WTC11 (cell line): ENCODE measurements at regions of chr11 and their contacts with region 1.

Region 1: GRCh38 chr11:47152953-47153950 is 23.4 kb downstream of the ARFGAP2 start:
- DNase-seq: peak; percentile 92
- ATAC-seq: peak; percentile 92
- H3K4me3 Mint-ChIP-seq: no peak overlapping the region
- H3K27ac Mint-ChIP-seq: peak overlapping the region; percentile 23; the same call in 1 of the 2 replicates
- H3K4me1 Mint-ChIP-seq: peaks cover 21% of the 10 kb centered on the region
- H3K27me3 Mint-ChIP-seq: no peaks in the 10 kb centered on the region
- CTCF ChIP-seq: peak; percentile 89

Region 2: GRCh38 chr11:46936138-46937110 is 216.8 kb before region 1 on chr11 and contains the start of gene CSTPP1:
- CTCF ChIA-PET with region 1: interaction called, 24 read pairs
- POLR2A ChIA-PET with region 1: no interaction called
- DNase-seq: peak; percentile 96
- ATAC-seq: peak; percentile 94
- H3K4me3 Mint-ChIP-seq: peak within 1 kb of the TSS; percentile 97
- H3K27ac Mint-ChIP-seq: peak within 1 kb of the TSS; percentile 89
- H3K4me1 Mint-ChIP-seq: peaks cover 9% of the 10 kb centered on the region
- H3K27me3 Mint-ChIP-seq: peaks cover 7% of the 10 kb centered on the region
- CTCF ChIP-seq: no peak
- total RNA-seq, gene CSTPP1: 23.6 to 27.6 TPM (median 27.5 TPM) in 3 replicates

Region 3: GRCh38 chr11:47000033-47000432 is 153.2 kb before region 1 on chr11:
- CTCF ChIA-PET with region 1: interaction called, 21 read pairs
- POLR2A ChIA-PET with region 1: no interaction called
- DNase-seq: no peak
- ATAC-seq: no peak
- H3K4me3 Mint-ChIP-seq: no peak overlapping the region
- H3K27ac Mint-ChIP-seq: no peak overlapping the region
- H3K4me1 Mint-ChIP-seq: peaks cover 4% of the 10 kb centered on the region
- H3K27me3 Mint-ChIP-seq: no peaks in the 10 kb centered on the region; the same call in 1 of the 2 replicates
- CTCF ChIP-seq: no peak

Region 4: GRCh38 chr11:47071791-47072261 is 81.4 kb before region 1 on chr11:
- CTCF ChIA-PET with region 1: interaction called, 16 read pairs
- POLR2A ChIA-PET with region 1: no interaction called
- DNase-seq: no peak
- ATAC-seq: 0 out of 2 replicates have a peak, but pooled peaks have one; percentile 20
- H3K4me3 Mint-ChIP-seq: no peak overlapping the region
- H3K27ac Mint-ChIP-seq: peak overlapping the region; percentile 84
- H3K4me1 Mint-ChIP-seq: peaks cover 25% of the 10 kb centered on the region
- H3K27me3 Mint-ChIP-seq: no peaks in the 10 kb centered on the region
- CTCF ChIP-seq: no peak

Region 5: DNA sequence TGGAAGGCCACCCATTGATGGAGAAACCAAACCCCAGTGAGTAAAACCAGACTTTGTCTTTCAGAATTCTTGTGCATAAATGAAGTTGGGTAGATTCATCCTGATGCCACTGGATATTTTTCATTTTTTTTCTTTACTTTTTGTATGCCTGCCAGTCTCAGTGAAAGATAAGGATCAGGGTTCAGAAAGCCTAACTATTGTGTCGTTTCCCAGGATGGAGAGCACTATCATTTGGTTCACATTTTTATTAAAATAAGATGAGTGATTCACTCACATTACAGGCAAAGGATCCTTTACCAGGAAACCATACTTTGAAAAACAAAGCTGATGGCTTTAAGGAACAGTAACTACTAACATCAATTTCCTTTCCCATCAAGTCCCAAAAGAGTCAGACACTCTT is 28.6 kb before region 1 on chr11:
- CTCF ChIA-PET with region 1: interaction called, 13 read pairs
- POLR2A ChIA-PET with region 1: no interaction called
- DNase-seq: no peak
- ATAC-seq: no peak
- H3K4me3 Mint-ChIP-seq: no peak overlapping the region
- H3K27ac Mint-ChIP-seq: peak overlapping the region; percentile 63
- H3K4me1 Mint-ChIP-seq: peaks cover 25% of the 10 kb centered on the region
- H3K27me3 Mint-ChIP-seq: no peaks in the 10 kb centered on the region
- CTCF ChIP-seq: no peak

Region 6: GRCh38 chr11:47355283-47356128 is 202.3 kb after region 1 on chr11:
- CTCF ChIA-PET with region 1: interaction called, 10 read pairs
- POLR2A ChIA-PET with region 1: no interaction called
- DNase-seq: peak; percentile 99
- ATAC-seq: peak; percentile 89
- H3K4me3 Mint-ChIP-seq: peak overlapping the region; percentile 66
- H3K27ac Mint-ChIP-seq: no peak overlapping the region
- H3K4me1 Mint-ChIP-seq: peaks cover 13% of the 10 kb centered on the region
- H3K27me3 Mint-ChIP-seq: no peaks in the 10 kb centered on the region
- CTCF ChIP-seq: peak; percentile 77